Activated B cell treated with CpG ODN at 0.5 μM for 24 hours (primary cell): ENCODE measurements at regions of chr13 and their contacts with region 1.

Region 1: GRCh38 chr13:49936085-49936940 is at the start of gene SPRYD7:
- DNase-seq: peak; percentile 100
- ATAC-seq: peak; percentile 98
- H3K4me3 Mint-ChIP-seq: peak within 1 kb of the TSS; percentile 97
- H3K27ac Mint-ChIP-seq: peak within 1 kb of the TSS; percentile 91
- H3K4me1 Mint-ChIP-seq: peaks cover 32% of the 10 kb centered on the region
- H3K27me3 Mint-ChIP-seq: no peaks in the 10 kb centered on the region
- CTCF ChIP-seq: no peak
- total RNA-seq, gene SPRYD7: 3.7 and 4.5 TPM in 2 replicates

Region 2: DNA sequence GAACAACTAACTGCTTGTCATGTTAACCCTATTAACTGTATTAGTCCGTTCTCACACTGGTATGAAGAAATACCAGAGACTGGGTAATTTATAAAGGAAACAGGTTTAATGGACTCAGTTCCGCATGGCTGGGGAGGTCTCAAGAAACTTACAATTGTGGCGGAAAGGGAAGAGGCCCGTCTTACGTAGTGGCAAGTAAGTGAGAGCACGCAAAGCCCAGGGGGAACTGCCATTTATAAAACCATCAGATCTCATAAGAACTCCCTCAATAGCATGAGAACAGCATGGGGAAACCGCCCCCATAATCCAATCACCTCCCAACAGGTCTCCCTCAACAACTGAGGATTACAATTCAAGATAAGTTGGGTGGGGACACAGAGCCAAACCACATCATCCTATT is 405.9 kb before region 1 on chr13:
- CTCF ChIA-PET with region 1: no interaction called
- POLR2A ChIA-PET with region 1: interaction called, 3 read pairs
- intact Hi-C with region 1: loop called (anchors 5 kb)
- DNase-seq: peak; percentile 30
- ATAC-seq: peak; percentile 88
- H3K4me3 Mint-ChIP-seq: peak overlapping the region; percentile 67
- H3K27ac Mint-ChIP-seq: peak overlapping the region; percentile 89
- H3K4me1 Mint-ChIP-seq: peaks cover 73% of the 10 kb centered on the region
- H3K27me3 Mint-ChIP-seq: no peaks in the 10 kb centered on the region
- CTCF ChIP-seq: no peak

Region 3: GRCh38 chr13:49585220-49586157 is 350.8 kb before region 1 on chr13 and contains the start of gene RCBTB1:
- CTCF ChIA-PET with region 1: no interaction called
- POLR2A ChIA-PET with region 1: interaction called, 4 read pairs
- intact Hi-C with region 1: loop called (anchors 5 kb)
- DNase-seq: peak; percentile 73
- ATAC-seq: peak; percentile 87
- H3K4me3 Mint-ChIP-seq: peak within 1 kb of the TSS; percentile 90
- H3K27ac Mint-ChIP-seq: peak within 1 kb of the TSS; percentile 86
- H3K4me1 Mint-ChIP-seq: peaks cover 31% of the 10 kb centered on the region
- H3K27me3 Mint-ChIP-seq: no peaks in the 10 kb centered on the region
- CTCF ChIP-seq: no peak
- total RNA-seq, gene RCBTB1: 19.7 and 22.6 TPM in 2 replicates

Region 4: DNA sequence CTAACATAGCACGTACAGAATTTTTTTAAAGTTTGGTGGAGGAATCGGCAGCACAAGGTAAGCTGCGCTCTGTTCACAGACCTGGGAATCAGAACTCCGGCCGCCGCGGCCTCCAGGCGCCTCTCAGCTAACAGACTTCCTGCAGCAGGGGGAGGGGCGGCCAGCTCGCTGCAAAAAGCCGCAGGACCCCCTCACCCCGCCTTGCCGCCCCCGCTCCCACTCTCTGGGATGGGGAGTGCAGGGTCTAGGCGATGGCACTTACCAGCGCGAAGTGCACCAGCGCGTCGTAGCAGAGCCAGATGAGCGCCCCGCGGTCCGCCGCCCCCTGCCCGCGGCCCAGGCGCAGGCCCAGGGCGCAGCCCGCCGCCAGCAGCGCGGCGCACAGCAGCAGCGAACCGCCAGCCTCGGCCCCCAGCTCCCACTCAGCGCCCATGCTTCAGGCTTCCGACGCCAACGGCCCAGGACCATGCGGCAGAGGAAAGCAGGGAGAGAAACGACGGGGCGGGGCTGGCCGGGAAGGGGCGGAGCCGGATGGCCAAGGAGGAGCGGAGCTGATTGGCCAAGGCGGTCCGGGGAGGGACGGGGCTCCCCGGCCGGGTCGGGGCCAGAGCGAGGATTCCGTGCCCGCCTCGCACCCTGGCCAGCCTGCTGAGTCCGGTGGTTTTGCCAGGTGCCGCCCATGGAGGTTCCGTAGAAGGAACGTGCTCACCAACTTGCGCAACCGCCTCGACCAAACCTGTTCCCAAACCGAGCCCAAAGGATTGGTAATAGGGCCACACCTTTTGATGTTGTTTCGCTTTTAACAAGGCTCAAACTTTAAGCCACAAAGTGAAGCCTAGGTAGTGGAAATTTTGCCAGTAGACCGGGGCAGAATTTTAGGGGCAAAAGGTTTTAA is 245.1 kb before region 1 on chr13 and contains the start of gene EBPL:
- CTCF ChIA-PET with region 1: no interaction called
- POLR2A ChIA-PET with region 1: no interaction called
- intact Hi-C with region 1: loop called (anchors 1 kb)
- DNase-seq: peak; percentile 85
- ATAC-seq: peak; percentile 96
- H3K4me3 Mint-ChIP-seq: peak within 1 kb of the TSS; percentile 89
- H3K27ac Mint-ChIP-seq: peak within 1 kb of the TSS; percentile 79
- H3K4me1 Mint-ChIP-seq: peaks cover 27% of the 10 kb centered on the region
- H3K27me3 Mint-ChIP-seq: no peaks in the 10 kb centered on the region
- CTCF ChIP-seq: no peak
- total RNA-seq, gene EBPL: 20.0 and 22.4 TPM in 2 replicates

Region 5: GRCh38 chr13:49840266-49840665 is 96.0 kb before region 1 on chr13:
- CTCF ChIA-PET with region 1: no interaction called
- POLR2A ChIA-PET with region 1: no interaction called
- intact Hi-C with region 1: loop called (anchors 5 kb)
- DNase-seq: no peak
- ATAC-seq: no peak
- H3K4me3 Mint-ChIP-seq: no peak overlapping the region
- H3K27ac Mint-ChIP-seq: no peak overlapping the region
- H3K4me1 Mint-ChIP-seq: no peaks in the 10 kb centered on the region
- H3K27me3 Mint-ChIP-seq: no peaks in the 10 kb centered on the region
- CTCF ChIP-seq: no peak

Region 6: DNA sequence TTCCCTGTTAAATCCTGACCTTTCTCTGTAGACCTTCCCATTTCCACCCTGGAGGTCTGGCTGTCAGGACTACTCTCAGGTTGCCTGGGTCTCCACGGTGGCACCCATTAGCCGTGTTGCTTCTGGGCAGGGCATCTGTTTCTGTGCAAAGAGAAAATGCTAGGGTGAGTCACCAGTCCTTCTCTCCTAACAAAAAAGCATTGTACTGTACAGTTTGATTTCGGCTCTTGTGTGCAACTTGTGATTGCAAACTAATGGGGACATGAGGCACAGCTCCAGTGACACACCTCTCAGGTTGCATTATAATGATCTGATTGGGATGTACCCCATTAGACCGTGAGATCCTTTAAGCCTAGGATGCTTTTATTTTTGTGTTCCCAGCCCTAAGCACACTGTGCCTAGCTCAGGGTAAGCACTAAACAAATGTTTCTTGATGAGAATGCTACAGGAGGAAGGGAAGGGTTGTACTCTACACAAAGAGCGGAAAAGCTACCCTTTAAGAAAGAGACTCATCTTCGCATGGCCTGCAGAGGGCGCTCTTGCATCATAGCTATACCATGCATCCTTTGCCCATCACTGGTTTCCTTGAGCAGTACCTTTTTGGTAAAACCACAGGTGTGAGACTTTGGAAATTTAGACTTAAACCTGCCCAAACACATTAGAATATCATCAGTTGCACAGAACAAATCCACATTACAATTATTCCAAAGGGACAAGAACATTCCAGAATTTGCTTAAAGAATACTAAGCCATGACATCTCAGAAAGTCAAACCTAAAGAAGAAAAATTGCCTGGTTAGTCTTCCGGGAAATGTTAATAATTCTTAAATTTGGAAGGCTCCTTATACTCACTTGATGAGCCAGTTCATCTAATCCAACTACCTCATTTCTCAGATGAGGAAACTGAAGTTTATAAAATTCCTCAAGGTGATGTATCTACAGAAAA is 40.3 kb after region 1 on chr13:
- CTCF ChIA-PET with region 1: interaction called, 5 read pairs
- POLR2A ChIA-PET with region 1: interaction called, 10 read pairs
- intact Hi-C with region 1: no loop called
- DNase-seq: peak; percentile 57
- ATAC-seq: peak; percentile 86
- H3K4me3 Mint-ChIP-seq: no peak overlapping the region
- H3K27ac Mint-ChIP-seq: no peak overlapping the region
- H3K4me1 Mint-ChIP-seq: peaks cover 2% of the 10 kb centered on the region
- H3K27me3 Mint-ChIP-seq: no peaks in the 10 kb centered on the region
- CTCF ChIP-seq: no peak

Region 7: DNA sequence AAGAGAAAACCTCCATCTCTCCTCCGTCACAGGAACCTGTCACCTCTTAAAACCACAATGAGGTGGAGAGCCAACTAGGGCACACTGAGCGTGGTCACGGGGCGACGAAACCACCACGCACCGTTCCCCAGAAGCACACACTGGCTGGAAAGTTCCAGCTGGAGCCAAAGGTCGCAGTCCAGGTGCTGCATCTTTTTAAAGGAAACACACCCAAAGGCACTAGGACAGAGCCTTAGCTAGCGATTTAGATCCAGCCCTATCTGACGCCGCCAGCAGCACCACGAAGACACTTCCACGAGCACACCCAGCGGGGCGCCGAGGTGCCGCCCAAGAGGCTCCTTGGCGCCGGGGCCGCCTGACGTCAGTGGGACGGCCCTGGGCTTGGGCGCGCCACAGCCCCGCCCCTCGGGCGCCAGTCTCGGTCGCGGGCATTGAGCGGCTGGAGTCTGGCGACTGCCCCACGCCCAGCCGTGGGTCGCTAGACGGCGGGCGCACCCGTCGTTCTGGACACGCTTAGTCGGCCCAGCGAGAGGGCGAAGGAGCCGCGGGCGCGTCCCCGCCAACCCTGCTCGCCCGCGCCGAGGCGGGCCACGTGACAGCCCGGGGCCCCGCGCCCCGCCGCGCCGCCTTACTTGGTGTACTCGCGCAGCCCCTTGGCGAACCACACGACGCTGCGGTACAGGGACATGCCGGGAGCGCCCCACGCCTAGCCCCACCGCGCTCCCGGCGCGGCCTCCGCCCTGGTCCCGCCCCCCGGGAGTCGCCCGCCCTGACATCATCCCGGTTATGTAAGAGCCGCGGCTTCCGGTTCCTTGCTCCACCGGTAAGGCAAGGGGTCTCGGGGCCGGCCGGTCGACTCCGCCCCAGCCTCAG is 1867.3 kb after region 1 on chr13 and contains the start of gene DHRS12:
- CTCF ChIA-PET with region 1: no interaction called
- POLR2A ChIA-PET with region 1: no interaction called
- intact Hi-C with region 1: loop called (anchors 5 kb)
- DNase-seq: peak; percentile 84
- ATAC-seq: peak; percentile 81
- H3K4me3 Mint-ChIP-seq: peak within 1 kb of the TSS; percentile 92
- H3K27ac Mint-ChIP-seq: peak within 1 kb of the TSS; percentile 99
- H3K4me1 Mint-ChIP-seq: peaks cover 47% of the 10 kb centered on the region
- H3K27me3 Mint-ChIP-seq: no peaks in the 10 kb centered on the region
- CTCF ChIP-seq: no peak
- total RNA-seq, gene DHRS12: 11.6 and 14.1 TPM in 2 replicates